HAP-1 (cell line): ENCODE measurements at regions of chr4 and their contacts with region 1.

Region 1: GRCh38 chr4:127616898-127617297 is 15.9 kb upstream of the INTU start:
- DNase-seq: no peak
- H3K4me3 ChIP-seq: no peak overlapping the region
- H3K4me1 ChIP-seq: peaks cover under 1% of the 10 kb centered on the region; the same call in 1 of the 2 replicates
- H3K27me3 ChIP-seq: no peaks in the 10 kb centered on the region

Region 2: GRCh38 chr4:127533028-127533700 is 83.7 kb before region 1 on chr4:
- in situ Hi-C with region 1: no loop called
- DNase-seq: no peak
- H3K4me3 ChIP-seq: no peak overlapping the region
- H3K4me1 ChIP-seq: peaks cover 7% of the 10 kb centered on the region
- H3K27me3 ChIP-seq: no peaks in the 10 kb centered on the region

Region 3: DNA sequence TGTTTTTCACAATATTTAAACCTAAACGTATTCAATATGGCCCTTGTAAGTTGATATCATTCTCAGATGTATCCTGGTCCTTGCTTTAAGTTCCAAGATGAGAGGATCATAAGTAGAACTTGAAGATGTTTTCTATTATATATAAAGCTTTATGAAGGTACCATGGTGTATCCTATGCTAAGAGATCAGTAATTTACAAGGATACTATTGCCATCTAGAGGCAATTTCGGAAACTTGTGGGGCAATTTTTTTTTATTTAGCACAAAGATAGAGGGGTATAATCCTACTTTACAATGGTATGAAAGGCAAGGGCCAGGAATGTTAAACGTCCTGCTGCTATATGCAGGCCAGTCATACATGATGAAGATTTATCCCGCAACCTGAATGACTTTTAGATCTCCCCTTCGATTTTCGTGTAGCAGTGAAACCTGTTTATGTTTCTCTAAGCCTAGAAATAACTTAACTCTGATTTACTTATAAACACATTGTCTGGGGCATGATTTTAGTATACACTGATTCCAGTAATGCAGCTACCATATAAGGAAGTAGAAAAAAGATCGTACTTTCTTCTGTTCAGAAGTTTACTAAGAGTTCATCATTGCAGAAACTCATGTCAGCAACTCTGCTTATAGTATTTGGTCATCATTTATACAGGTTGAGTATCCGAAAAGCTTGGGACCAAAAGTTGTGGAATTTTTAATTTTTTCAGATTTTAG is 115.9 kb after region 1 on chr4:
- in situ Hi-C with region 1: loop called (anchors 10 kb)
- DNase-seq: peak; percentile 36 to 91
- H3K4me3 ChIP-seq: no peak overlapping the region
- H3K4me1 ChIP-seq: peaks cover 10% of the 10 kb centered on the region
- H3K27me3 ChIP-seq: no peaks in the 10 kb centered on the region